WTC11 (cell line): ENCODE measurements at regions of chr17 and their contacts with region 1.

Region 1: GRCh38 chr17:73255671-73256181 is 6.0 kb downstream of the CPSF4L start:
- DNase-seq: peak; percentile 87
- ATAC-seq: peak; percentile 87
- H3K4me3 Mint-ChIP-seq: no peak overlapping the region
- H3K27ac Mint-ChIP-seq: no peak overlapping the region
- H3K4me1 Mint-ChIP-seq: peaks cover 14% of the 10 kb centered on the region
- H3K27me3 Mint-ChIP-seq: no peaks in the 10 kb centered on the region; the same call in none of the 2 replicates
- CTCF ChIP-seq: peak; percentile 95

Region 2: GRCh38 chr17:73342050-73342522 is 86.4 kb after region 1 on chr17:
- CTCF ChIA-PET with region 1: interaction called, 14 read pairs
- POLR2A ChIA-PET with region 1: no interaction called
- DNase-seq: peak; percentile 75
- ATAC-seq: peak; percentile 74
- H3K4me3 Mint-ChIP-seq: peak overlapping the region; percentile 18; the same call in 1 of the 2 replicates
- H3K27ac Mint-ChIP-seq: peak overlapping the region; percentile 83
- H3K4me1 Mint-ChIP-seq: peaks cover 48% of the 10 kb centered on the region
- H3K27me3 Mint-ChIP-seq: no peaks in the 10 kb centered on the region
- CTCF ChIP-seq: no peak

Region 3: GRCh38 chr17:73376636-73377035 is 120.9 kb after region 1 on chr17:
- CTCF ChIA-PET with region 1: interaction called, 143 read pairs
- POLR2A ChIA-PET with region 1: no interaction called
- DNase-seq: no peak
- ATAC-seq: no peak
- H3K4me3 Mint-ChIP-seq: no peak overlapping the region
- H3K27ac Mint-ChIP-seq: no peak overlapping the region
- H3K4me1 Mint-ChIP-seq: peaks cover 6% of the 10 kb centered on the region
- H3K27me3 Mint-ChIP-seq: no peaks in the 10 kb centered on the region
- CTCF ChIP-seq: no peak